ENCODE measurements at regions of chr3 and their contacts with region 1.

Region 1: GRCh38 chr3:50568947-50569749 is at the start of gene HEMK1:
- DNase-seq: peak; percentile 99
- ATAC-seq: peak; percentile 95
- H3K4me3 ChIP-seq: peak within 1 kb of the TSS; percentile 56 to 62
- H3K27ac ChIP-seq: peak within 1 kb of the TSS in 1 of 2 donors; percentile 72
- H3K4me1 ChIP-seq: no peaks in the 10 kb centered on the region
- H3K27me3 ChIP-seq: no peaks in the 10 kb centered on the region
- total RNA-seq, gene HEMK1: 12.0 to 21.3 TPM

Region 2: GRCh38 chr3:50600841-50601591 is 31.9 kb after region 1 on chr3:
- intact Hi-C with region 1: loop called in 1 of 2 experiments (anchors 1 kb)
- DNase-seq: peak; percentile 97
- ATAC-seq: peak; percentile 91
- H3K4me3 ChIP-seq: no peak overlapping the region
- H3K27ac ChIP-seq: peak overlapping the region; percentile 49 to 99
- H3K4me1 ChIP-seq: peaks cover 0 to 4% of the 10 kb centered on the region in 2 donors
- H3K27me3 ChIP-seq: no peaks in the 10 kb centered on the region

Region 3: DNA sequence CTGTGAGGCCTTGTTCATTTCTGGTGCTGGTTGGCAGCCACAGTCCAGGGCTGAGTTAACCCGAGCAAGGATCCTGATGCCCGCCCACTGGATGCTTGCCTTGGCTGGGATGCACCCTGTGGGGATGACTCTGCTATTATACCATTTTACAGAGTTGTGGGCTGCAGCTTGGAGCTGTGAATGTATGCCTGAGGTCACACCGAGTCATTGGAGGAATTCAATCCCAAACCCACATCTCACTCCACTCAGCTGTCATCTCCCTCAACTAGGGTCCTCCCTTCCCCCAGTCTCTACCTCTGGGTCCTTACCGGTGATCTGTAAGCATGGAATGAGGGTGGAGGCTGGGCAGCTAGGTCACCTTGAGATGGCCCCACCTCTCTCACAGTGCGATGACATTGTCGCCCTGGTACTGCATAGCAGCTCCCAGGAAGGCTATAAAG is 69.9 kb after region 1 on chr3:
- intact Hi-C with region 1: no loop called
- DNase-seq: peak in 1 of 2 donors; percentile 59
- ATAC-seq: no peak
- H3K4me3 ChIP-seq: no peak overlapping the region
- H3K27ac ChIP-seq: no peak overlapping the region
- H3K4me1 ChIP-seq: no peaks in the 10 kb centered on the region
- H3K27me3 ChIP-seq: no peaks in the 10 kb centered on the region

Region 4: GRCh38 chr3:51384726-51385473 is 815.8 kb after region 1 on chr3 and contains the start of gene MANF:
- intact Hi-C with region 1: loop called in 1 of 2 experiments (anchors 5 kb)
- DNase-seq: peak; percentile 99
- ATAC-seq: peak; percentile 98
- H3K4me3 ChIP-seq: peak within 1 kb of the TSS; percentile 43 to 72
- H3K27ac ChIP-seq: peak within 1 kb of the TSS; percentile 57 to 81
- H3K4me1 ChIP-seq: peaks cover 0 to 2% of the 10 kb centered on the region in 2 donors
- H3K27me3 ChIP-seq: no peaks in the 10 kb centered on the region
- total RNA-seq, gene MANF: 78.9 to 108 TPM

Measured in aorta (tissue), 5 donors.